ENCODE measurements at regions of chr22 and their contacts with region 1.

Region 1: DNA sequence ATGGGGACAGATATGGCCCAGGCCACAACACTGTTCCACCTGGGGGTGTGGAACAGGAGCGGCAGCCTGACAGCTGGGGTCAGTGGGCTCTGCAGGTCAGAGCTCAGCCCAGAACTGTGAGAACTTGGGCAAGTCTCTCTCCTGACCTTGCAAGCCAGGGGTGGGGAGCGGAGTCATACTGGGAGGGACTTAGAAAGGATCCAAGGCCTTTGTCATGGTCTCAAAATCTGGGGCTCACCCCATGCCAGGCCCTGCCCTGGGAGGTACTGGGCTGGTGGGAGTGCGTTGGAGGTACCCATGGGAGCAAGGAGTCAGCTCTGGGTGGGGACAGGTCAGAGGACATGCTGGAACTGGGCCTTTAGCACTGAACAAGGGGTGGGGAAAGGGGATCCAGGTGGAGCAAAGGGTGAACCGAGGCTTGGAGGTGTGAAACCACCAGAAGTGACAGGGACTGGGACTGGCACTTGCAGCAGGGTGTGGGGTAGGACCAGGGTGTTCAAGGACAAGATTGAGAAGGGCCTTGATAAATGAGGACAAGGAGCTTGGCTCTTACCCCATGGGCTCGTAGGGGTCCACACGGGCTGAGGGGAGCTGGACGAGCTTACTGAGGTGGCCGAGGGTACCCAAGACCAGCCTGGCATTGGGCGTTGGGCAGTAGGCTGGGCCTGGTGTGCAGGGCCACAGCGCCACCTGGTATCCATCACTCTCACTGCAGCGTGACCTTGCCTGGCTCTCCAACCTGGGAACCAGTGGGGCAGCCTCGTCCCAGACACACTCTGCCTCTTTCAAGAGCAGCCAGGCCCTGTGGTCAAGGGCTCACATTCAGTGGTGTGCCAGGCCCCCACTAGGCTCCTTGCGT is 7.4 kb upstream of the PMM1 start:
- DNase-seq: peak; percentile 34 to 61 (median 48)
- ATAC-seq: peak; percentile 90
- H3K4me3 ChIP-seq: no peak overlapping the region
- H3K27ac ChIP-seq: peak overlapping the region; percentile 68; the same call in 2 of the 3 replicates
- H3K4me1 ChIP-seq: peaks cover 22 to 34% of the 10 kb centered on the region in 2 experiments
- H3K27me3 ChIP-seq: no peaks in the 10 kb centered on the region
- CTCF ChIP-seq: peak; percentile 70 to 84 (median 76)
- EP300 ChIP-seq: no peak
- POLR2A ChIP-seq: peak; percentile 47; the same call in 1 of the 2 replicates
- RAD21 ChIP-seq: peak; percentile 62 to 75

Region 2: GRCh38 chr22:41576877-41577276 is 20.1 kb before region 1 on chr22:
- CTCF ChIA-PET with region 1: interaction called, 3 read pairs
- POLR2A ChIA-PET with region 1: interaction called, 4 read pairs
- in situ Hi-C with region 1: no loop called
- intact Hi-C with region 1: loop called (anchors 2 kb)
- DNase-seq: peak; percentile 62 to 78 (median 70)
- ATAC-seq: peak; percentile 94
- H3K4me3 ChIP-seq: no peak overlapping the region
- H3K27ac ChIP-seq: no peak overlapping the region
- H3K4me1 ChIP-seq: peaks cover 6 to 40% of the 10 kb centered on the region in 2 experiments; a peak in 4 of 5 replicates
- H3K27me3 ChIP-seq: no peaks in the 10 kb centered on the region
- CTCF ChIP-seq: peak; percentile 89 to 99 (median 99)
- EP300 ChIP-seq: no peak
- POLR2A ChIP-seq: no peak
- RAD21 ChIP-seq: peak; percentile 46 to 80

Region 3: GRCh38 chr22:41625577-41625976 is 28.6 kb after region 1 on chr22:
- CTCF ChIA-PET with region 1: no interaction called
- POLR2A ChIA-PET with region 1: no interaction called
- in situ Hi-C with region 1: no loop called
- intact Hi-C with region 1: no loop called
- DNase-seq: no peak
- ATAC-seq: no peak
- H3K4me3 ChIP-seq: no peak overlapping the region
- H3K27ac ChIP-seq: no peak overlapping the region
- H3K4me1 ChIP-seq: peaks cover 2 to 5% of the 10 kb centered on the region in 2 experiments; a peak in 4 of 5 replicates
- H3K27me3 ChIP-seq: no peaks in the 10 kb centered on the region
- CTCF ChIP-seq: no peak
- EP300 ChIP-seq: no peak
- POLR2A ChIP-seq: no peak
- RAD21 ChIP-seq: no peak

Measured in K562 (cell line).